IMR-90 (cell line): ENCODE measurements at regions of chr11 and their contacts with region 1.

Region 1: GRCh38 chr11:76734456-76735420 is 48.4 kb upstream of the TSKU start:
- DNase-seq: no peak
- ATAC-seq: no peak; the same call in 1 of the 2 replicates
- H3K4me3 ChIP-seq: no peak overlapping the region
- H3K27ac ChIP-seq: no peak overlapping the region
- H3K4me1 ChIP-seq: peaks cover 2% of the 10 kb centered on the region; the same call in 1 of the 2 replicates
- H3K27me3 ChIP-seq: peaks cover 52% of the 10 kb centered on the region
- CTCF ChIP-seq: no peak
- POLR2A ChIP-seq: no peak
- RAD21 ChIP-seq: no peak

Region 2: GRCh38 chr11:76391021-76391420 is 343.7 kb before region 1 on chr11:
- CTCF ChIA-PET with region 1: no interaction called
- POLR2A ChIA-PET with region 1: no interaction called
- dilution Hi-C with region 1: no loop called
- in situ Hi-C with region 1: no loop called
- intact Hi-C with region 1: no loop called
- DNase-seq: no peak
- ATAC-seq: no peak
- H3K4me3 ChIP-seq: no peak overlapping the region
- H3K27ac ChIP-seq: no peak overlapping the region
- H3K4me1 ChIP-seq: no peaks in the 10 kb centered on the region
- H3K27me3 ChIP-seq: no peaks in the 10 kb centered on the region
- CTCF ChIP-seq: no peak
- POLR2A ChIP-seq: no peak
- RAD21 ChIP-seq: no peak

Region 3: DNA sequence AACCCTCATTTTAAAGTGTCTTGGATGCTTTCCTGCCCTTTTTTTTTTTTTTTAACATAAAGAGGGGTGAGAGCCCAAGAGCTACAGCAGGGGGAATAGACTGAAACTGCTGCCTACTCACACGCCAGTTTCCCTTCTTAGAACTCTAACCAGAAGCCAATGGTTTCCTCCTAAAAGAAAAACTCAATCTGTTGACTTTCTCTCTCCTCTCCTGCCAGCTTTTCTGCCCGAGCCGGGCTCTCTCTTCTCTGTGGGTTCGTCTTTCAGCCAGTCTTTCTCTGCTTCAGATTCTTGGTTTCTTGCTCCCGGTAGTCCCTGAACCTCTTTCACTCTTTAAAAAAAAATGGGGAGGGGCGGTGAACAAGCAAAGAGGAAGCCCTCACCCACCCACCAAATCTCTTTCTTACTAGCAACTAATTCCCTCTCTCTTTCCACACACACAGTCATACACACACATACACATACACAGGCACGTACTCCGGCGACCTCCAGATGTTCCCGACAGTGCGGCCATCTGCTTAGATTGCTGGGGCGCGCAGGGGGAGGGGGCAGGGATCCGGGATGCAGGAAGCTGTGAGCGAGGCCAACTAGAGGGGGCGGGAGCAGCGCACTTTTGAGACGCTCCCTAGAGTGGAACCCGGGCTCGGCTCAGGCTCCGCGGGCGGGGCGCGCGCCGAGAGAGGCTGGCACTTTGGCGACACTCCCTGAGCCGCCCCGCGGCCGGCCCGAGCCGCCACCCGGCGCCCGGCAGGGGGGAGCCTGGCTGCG is 48.0 kb after region 1 on chr11:
- CTCF ChIA-PET with region 1: no interaction called
- POLR2A ChIA-PET with region 1: no interaction called
- dilution Hi-C with region 1: no loop called
- in situ Hi-C with region 1: no loop called
- intact Hi-C with region 1: loop called (anchors 2 kb)
- DNase-seq: peak; percentile 98
- ATAC-seq: peak; percentile 87
- H3K4me3 ChIP-seq: peak overlapping the region; percentile 92
- H3K27ac ChIP-seq: peak overlapping the region; percentile 90
- H3K4me1 ChIP-seq: peaks cover 24% of the 10 kb centered on the region
- H3K27me3 ChIP-seq: peaks cover 10% of the 10 kb centered on the region; the same call in 1 of the 2 replicates
- CTCF ChIP-seq: no peak
- POLR2A ChIP-seq: no peak; the same call in 1 of the 2 replicates
- RAD21 ChIP-seq: peak; percentile 29; the same call in 1 of the 2 replicates

Region 4: DNA sequence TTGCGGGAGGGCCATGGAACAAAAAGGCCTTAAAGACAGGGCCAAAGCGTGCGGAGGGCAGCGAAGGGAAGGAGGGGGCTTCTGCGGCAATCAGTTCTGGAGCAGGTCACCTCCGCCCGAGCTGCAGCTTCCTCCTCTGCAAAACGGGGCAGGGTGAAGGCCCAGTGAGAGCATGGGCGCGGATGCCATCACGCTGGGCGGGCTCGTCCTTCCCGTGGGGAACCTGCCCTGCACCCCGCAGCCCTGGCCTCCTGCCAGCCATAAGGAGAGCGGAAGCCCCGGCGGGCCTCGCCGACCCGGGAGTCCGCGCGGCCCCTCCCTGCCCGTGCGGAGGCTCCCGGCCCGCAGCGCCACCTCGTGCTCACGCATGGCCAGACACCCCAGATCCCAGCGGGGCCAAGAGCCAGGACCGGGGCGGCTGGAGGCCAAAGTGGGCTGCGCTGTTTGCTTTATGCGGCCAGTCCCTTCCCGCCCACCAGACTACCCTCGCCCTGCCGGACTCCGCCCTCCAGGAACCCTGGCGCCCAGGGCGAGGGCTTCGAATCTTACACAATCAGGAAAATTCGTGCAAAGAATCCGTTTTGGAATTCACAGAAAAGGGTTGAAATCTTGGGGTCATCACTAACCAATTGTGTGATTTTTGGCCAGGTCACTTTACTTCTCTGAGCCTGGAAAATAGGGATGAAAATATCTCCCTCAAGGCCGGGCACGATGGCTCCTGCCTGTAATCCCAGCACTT is 64.5 kb after region 1 on chr11:
- CTCF ChIA-PET with region 1: interaction called, 4 read pairs
- POLR2A ChIA-PET with region 1: no interaction called
- dilution Hi-C with region 1: no loop called
- in situ Hi-C with region 1: no loop called
- intact Hi-C with region 1: loop called (anchors 1 kb)
- DNase-seq: peak; percentile 57
- ATAC-seq: peak; percentile 78
- H3K4me3 ChIP-seq: no peak overlapping the region
- H3K27ac ChIP-seq: no peak overlapping the region
- H3K4me1 ChIP-seq: peaks cover 30% of the 10 kb centered on the region
- H3K27me3 ChIP-seq: no peaks in the 10 kb centered on the region
- CTCF ChIP-seq: peak; percentile 91
- POLR2A ChIP-seq: peak; percentile 31; the same call in 1 of the 2 replicates
- RAD21 ChIP-seq: peak; percentile 89

Region 5: DNA sequence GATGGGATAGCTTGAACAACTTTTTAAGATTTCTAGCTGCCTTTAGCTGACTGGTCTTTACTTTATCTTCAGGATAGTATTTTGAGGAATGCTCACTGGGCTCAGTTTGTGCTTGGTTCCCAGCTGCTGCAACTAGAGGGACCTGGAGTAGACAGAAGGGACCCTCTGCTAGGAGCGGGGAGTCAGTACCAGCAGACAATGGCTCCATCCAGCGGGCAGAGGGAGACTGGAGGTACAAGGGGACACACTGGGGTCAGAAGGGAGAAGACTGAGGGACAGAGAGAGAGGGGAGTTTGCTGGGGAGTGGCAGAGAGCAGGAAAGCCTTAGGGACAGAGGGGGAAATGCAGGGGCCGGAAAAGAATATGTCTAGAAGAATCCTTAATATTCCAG is 103.9 kb after region 1 on chr11:
- CTCF ChIA-PET with region 1: no interaction called
- POLR2A ChIA-PET with region 1: no interaction called
- dilution Hi-C with region 1: no loop called
- in situ Hi-C with region 1: no loop called
- intact Hi-C with region 1: loop called (anchors 1 kb)
- DNase-seq: no peak
- ATAC-seq: peak; percentile 25; the same call in 1 of the 2 replicates
- H3K4me3 ChIP-seq: no peak overlapping the region
- H3K27ac ChIP-seq: no peak overlapping the region
- H3K4me1 ChIP-seq: peaks cover 5% of the 10 kb centered on the region; the same call in 1 of the 2 replicates
- H3K27me3 ChIP-seq: peaks cover 55% of the 10 kb centered on the region
- CTCF ChIP-seq: peak; percentile 44
- POLR2A ChIP-seq: no peak
- RAD21 ChIP-seq: peak; percentile 59

Region 6: DNA sequence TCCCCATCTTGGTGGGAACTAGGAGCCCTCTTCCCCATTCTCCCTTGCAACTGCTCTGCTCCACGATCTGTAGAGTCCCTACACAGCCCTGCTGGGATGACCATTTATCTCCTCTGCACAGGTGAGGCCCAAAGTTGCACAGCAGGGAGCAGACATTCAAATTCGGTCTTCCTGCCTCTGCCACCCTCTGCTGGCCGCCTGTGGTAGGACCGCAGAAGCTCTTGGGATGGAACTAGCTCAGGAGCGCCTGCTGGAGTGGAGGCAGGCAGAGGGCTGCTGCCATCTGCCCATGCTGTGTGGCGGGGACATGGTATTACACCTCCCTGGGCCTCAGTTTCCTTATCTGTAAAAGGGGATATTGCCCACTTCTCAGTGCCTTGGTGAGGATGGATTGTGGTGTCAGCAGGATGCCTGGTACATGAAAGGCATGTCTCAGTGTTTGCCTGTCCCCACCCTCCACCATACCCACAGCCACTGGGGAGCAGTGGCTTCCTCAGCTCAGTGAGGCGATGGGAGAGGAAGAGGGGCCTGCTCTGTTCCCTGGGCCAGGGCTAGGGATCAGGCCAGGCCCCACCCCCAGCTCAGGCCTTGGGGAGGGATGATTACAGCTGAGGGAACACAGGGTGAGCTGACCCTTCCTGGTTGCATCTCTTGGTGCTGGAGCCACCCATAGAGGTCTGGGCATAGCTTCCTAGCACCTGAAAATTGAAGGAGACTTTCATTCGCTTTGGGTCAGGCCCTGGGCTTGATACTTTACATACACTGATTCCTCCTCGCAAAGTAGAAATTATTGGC is 356.6 kb after region 1 on chr11:
- CTCF ChIA-PET with region 1: no interaction called
- POLR2A ChIA-PET with region 1: no interaction called
- dilution Hi-C with region 1: no loop called
- in situ Hi-C with region 1: no loop called
- intact Hi-C with region 1: loop called (anchors 1 kb)
- DNase-seq: peak; percentile 65
- ATAC-seq: peak; percentile 99
- H3K4me3 ChIP-seq: no peak overlapping the region
- H3K27ac ChIP-seq: no peak overlapping the region
- H3K4me1 ChIP-seq: no peaks in the 10 kb centered on the region
- H3K27me3 ChIP-seq: no peaks in the 10 kb centered on the region
- CTCF ChIP-seq: peak; percentile 96
- POLR2A ChIP-seq: peak; percentile 50; the same call in 1 of the 2 replicates
- RAD21 ChIP-seq: peak; percentile 94